ENCODE measurements at regions of chr1 and their contacts with region 1.

Region 1: DNA sequence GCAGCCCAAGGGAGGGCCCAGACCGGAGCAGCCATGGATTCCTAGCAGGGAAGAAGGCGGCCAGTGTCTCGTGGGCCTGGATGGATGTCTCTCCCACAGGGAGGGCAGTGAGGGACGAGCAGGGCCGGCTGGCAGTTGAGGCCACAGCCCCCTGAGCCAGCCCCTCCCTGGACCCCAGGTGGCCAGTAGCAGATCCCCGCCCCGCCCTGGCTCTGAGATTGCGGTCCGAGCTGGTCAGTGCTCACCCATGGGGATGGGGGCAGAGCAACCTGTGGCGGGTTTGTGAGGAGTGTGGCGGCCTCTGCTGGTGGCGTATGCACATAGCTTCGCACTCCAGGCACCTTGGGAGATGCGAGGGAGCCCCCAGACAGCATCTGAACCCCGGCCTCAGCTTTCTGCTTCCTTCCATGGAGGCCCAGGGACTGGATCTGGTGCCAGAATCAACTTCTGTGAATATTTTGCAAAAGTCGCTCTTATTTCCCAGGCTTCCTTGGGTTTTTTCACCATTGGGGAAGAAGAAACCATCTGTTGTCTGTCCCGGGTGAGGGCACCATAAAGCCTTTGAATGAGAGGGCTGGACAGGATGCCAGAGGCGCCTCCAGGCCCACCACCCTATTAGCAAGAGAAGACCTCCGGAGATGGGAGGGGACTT is 8.4 kb upstream of the KCNN3 start:
- DNase-seq: peak; percentile 51 to 93
- H3K4me3 ChIP-seq: peak overlapping the region in 2 of 4 experiments; percentile 10 to 27; a peak in 2 of 8 replicates
- H3K27ac ChIP-seq: no peak overlapping the region
- H3K4me1 ChIP-seq: peaks cover 0 to 6% (median 0%) of the 10 kb centered on the region in 4 experiments; a peak in 1 of 7 replicates
- H3K27me3 ChIP-seq: no peaks in the 10 kb centered on the region
- CTCF ChIP-seq: peak; percentile 95 to 97 (median 96)
- EP300 ChIP-seq: no peak
- POLR2A ChIP-seq: no peak
- RAD21 ChIP-seq: peak; percentile 98 to 99

Region 2: DNA sequence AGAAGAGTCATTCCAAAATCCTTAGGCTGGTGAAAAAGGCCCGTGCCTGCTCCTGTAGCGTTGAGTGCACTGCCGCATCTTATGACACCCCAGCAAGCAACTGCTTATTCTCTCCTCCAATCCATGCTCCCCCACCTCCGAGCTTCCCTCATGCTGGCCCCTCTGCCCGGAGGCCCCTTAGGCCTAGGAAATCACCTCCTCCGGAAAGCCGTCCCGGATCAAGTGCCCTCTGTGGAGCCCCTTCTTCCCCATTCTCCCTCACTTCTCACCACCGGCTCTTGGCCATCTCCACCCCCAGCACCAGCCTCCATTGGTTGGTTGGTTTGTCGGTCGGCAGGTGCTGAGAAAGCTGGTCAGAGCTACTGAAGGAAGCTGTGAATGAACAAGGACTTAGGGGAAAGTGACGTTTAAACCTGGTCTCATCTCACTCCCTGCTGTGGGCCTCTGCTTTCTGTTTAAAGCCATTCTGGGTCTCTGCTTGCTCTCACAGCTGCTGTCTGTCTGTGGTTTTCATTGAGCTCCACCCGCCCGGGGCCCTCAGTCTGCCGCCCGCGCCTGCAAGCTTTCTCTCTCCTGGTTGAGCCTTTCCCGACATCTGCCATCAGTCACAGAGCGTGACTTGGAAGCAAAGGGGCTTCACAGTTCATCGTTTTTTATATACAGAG is 130.6 kb before region 1 on chr1:
- CTCF ChIA-PET with region 1: interaction called, 10 read pairs
- POLR2A ChIA-PET with region 1: no interaction called
- DNase-seq: no peak
- H3K4me3 ChIP-seq: no peak overlapping the region
- H3K27ac ChIP-seq: no peak overlapping the region
- H3K4me1 ChIP-seq: peaks cover 0 to 27% (median 11%) of the 10 kb centered on the region in 4 experiments; a peak in 6 of 7 replicates
- H3K27me3 ChIP-seq: no peaks in the 10 kb centered on the region
- CTCF ChIP-seq: no peak
- EP300 ChIP-seq: no peak
- POLR2A ChIP-seq: no peak
- RAD21 ChIP-seq: no peak

Region 3: DNA sequence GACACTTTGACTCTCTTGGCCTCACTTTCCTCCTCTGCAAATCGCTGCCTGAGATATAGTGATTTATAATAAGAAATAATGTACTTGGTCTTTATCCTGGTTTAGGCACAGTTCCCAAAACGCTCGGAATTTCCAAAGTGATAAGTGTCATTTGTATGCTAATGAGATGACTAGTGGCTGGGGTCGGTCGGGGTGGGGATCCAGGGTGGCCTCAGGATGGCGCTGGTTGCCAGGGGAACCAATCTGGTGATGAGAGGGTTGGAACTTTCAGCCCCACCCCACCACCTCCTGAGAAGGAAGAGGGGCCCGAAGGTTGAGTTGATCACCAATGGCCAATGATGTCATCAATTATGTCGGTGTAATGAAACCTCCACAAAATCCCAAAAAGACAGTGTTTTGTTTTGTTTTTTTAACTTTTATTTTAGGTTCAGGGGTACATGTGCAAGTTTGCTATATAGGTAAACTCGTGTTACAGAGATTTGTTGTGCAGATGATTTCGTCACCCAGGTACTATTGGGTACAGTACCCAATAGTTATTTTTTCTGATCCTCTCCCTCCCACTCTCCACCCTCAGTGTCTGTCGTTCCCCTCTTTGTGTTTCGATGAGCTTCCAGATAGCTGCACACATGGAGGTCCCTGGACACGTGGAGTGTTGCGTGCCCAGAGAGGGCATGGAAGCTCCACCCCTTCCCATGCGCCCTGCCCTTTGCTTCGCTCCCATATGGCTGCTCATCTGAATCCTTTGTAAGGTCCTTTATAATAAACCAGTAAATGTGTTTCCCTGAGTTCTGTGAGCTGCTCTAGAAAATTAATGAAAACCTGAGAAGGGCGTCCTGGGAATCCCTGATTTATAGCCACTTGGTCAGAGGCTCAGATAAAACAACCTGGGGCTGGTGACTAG is 105.6 kb before region 1 on chr1:
- CTCF ChIA-PET with region 1: interaction called, 39 read pairs
- POLR2A ChIA-PET with region 1: no interaction called
- DNase-seq: peak; percentile 17 to 69
- H3K4me3 ChIP-seq: no peak overlapping the region
- H3K27ac ChIP-seq: no peak overlapping the region
- H3K4me1 ChIP-seq: peaks cover 0 to 11% (median 8%) of the 10 kb centered on the region in 4 experiments; a peak in 6 of 7 replicates
- H3K27me3 ChIP-seq: no peaks in the 10 kb centered on the region
- CTCF ChIP-seq: peak; percentile 55 to 65 (median 60)
- EP300 ChIP-seq: no peak
- POLR2A ChIP-seq: no peak
- RAD21 ChIP-seq: peak; percentile 76 to 82

Region 4: DNA sequence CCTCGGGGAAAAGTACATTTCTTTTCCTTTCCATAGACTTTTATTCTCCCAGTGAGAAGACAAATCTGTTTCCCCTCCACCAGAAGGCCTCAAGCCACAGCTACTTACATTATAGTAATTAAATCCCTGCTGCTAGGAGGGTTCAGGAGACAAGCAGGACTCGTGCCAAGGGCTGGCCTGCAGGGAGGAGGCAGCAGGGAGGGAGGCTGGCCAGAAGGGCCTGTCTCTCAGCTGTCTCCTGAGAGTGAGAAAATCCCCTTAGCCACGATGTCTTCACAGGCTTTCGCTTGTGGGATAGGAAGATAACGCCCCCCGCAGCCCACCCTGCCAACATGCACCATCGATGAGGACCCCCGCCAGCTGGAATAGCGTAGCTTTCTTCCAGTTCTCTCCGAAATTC is 22.4 kb before region 1 on chr1:
- CTCF ChIA-PET with region 1: interaction called, 14 read pairs
- POLR2A ChIA-PET with region 1: no interaction called
- DNase-seq: no peak
- H3K4me3 ChIP-seq: no peak overlapping the region
- H3K27ac ChIP-seq: no peak overlapping the region
- H3K4me1 ChIP-seq: no peaks in the 10 kb centered on the region
- H3K27me3 ChIP-seq: no peaks in the 10 kb centered on the region
- CTCF ChIP-seq: peak; percentile 33 to 40 (median 36); a peak in 3 of 4 replicates
- EP300 ChIP-seq: no peak
- POLR2A ChIP-seq: no peak
- RAD21 ChIP-seq: peak; percentile 59 to 63

Region 5: GRCh38 chr1:154863315-154864174 is 15.0 kb before region 1 on chr1:
- CTCF ChIA-PET with region 1: interaction called, 35 read pairs
- POLR2A ChIA-PET with region 1: interaction called, 7 read pairs
- DNase-seq: peak in 1 of 2 experiments; percentile 76
- H3K4me3 ChIP-seq: no peak overlapping the region
- H3K27ac ChIP-seq: no peak overlapping the region
- H3K4me1 ChIP-seq: peaks cover 10 to 36% (median 15%) of the 10 kb centered on the region in 4 experiments; a peak in 6 of 7 replicates
- H3K27me3 ChIP-seq: peaks cover 0 to 6% (median 5%) of the 10 kb centered on the region in 4 experiments; a peak in 3 of 7 replicates
- CTCF ChIP-seq: peak; percentile 67 to 86 (median 80)
- EP300 ChIP-seq: no peak
- POLR2A ChIP-seq: no peak
- RAD21 ChIP-seq: peak; percentile 46 to 62

Region 6: GRCh38 chr1:154891452-154891851 is 13.0 kb after region 1 on chr1:
- CTCF ChIA-PET with region 1: interaction called, 10 read pairs
- POLR2A ChIA-PET with region 1: interaction called, 3 read pairs
- DNase-seq: no peak
- H3K4me3 ChIP-seq: no peak overlapping the region
- H3K27ac ChIP-seq: no peak overlapping the region
- H3K4me1 ChIP-seq: no peaks in the 10 kb centered on the region
- H3K27me3 ChIP-seq: 0 out of 7 replicates have a peak, but pooled peaks cover 0 to 2% (median 0%) of the 10 kb centered on the region in 4 experiments
- CTCF ChIP-seq: no peak
- EP300 ChIP-seq: no peak
- POLR2A ChIP-seq: no peak
- RAD21 ChIP-seq: no peak

Region 7: GRCh38 chr1:154961497-154962262 is 83.2 kb after region 1 on chr1 and contains the start of gene PYGO2:
- CTCF ChIA-PET with region 1: no interaction called
- POLR2A ChIA-PET with region 1: no interaction called
- DNase-seq: peak in 1 of 2 experiments; percentile 91
- H3K4me3 ChIP-seq: peak within 1 kb of the TSS; percentile 50 to 84 (median 54)
- H3K27ac ChIP-seq: peak within 1 kb of the TSS; percentile 99
- H3K4me1 ChIP-seq: peaks cover 2 to 9% (median 5%) of the 10 kb centered on the region in 4 experiments
- H3K27me3 ChIP-seq: no peaks in the 10 kb centered on the region; a peak in 1 of 7 replicates
- CTCF ChIP-seq: peak; percentile 37 to 55 (median 53)
- EP300 ChIP-seq: peak in 1 of 2 experiments; percentile 77; a peak in 1 of 3 replicates
- POLR2A ChIP-seq: peak; percentile 85 to 90
- RAD21 ChIP-seq: peak; percentile 5 to 53; a peak in 1 of 4 replicates
- total RNA-seq, gene PYGO2: 31.6 and 32.4 TPM in 2 replicates